Aorta (tissue), 5 donors: ENCODE measurements at regions of chr2 and their contacts with region 1.

Region 1: DNA sequence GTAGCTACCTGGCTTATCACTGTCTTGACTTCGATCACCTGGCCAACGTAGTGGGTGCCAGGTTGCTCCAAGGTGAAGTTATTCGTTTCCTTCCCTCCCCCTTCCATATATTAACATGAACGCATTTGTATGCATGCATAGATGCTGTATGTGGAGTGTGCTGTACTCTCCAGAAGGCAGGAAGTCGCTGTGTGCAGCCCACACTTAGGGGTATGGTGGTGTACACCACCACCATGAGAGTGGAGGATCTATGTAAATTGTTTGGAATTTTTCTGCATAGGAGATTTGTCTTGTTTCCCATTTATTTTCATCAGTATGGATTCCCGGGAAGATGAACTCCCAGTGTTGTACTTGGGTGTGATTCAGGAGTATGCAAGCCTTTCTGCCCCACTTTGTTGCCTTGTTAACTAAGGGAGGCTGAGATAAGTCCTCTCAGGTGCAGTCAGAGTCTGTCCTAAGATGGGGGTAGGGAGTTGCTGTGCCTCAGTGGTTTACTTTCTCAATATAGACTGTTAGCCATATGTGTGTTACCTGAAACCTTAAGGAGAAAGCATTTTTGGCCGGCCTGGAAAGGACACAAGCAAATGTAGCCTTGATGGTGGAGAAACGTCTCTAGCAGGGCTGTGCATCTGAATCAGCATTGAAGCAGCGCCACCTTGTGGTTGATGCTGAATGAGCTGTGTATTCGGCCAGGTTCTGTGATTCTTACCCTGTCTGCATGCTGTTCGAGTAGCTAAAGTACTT is 149.8 kb downstream of the TANC1 start:
- DNase-seq: peak; percentile 87 to 94
- ATAC-seq: peak; percentile 79
- H3K4me3 ChIP-seq: no peak overlapping the region
- H3K27ac ChIP-seq: peak overlapping the region in 1 of 2 donors; percentile 20
- H3K4me1 ChIP-seq: peaks cover 0 to 8% of the 10 kb centered on the region in 2 donors
- H3K27me3 ChIP-seq: no peaks in the 10 kb centered on the region

Region 2: GRCh38 chr2:158903711-158904443 is 214.4 kb before region 1 on chr2:
- intact Hi-C with region 1: loop called (anchors 2 to 5 kb)
- DNase-seq: no peak
- ATAC-seq: no peak
- H3K4me3 ChIP-seq: no peak overlapping the region
- H3K27ac ChIP-seq: no peak overlapping the region
- H3K4me1 ChIP-seq: no peaks in the 10 kb centered on the region
- H3K27me3 ChIP-seq: no peaks in the 10 kb centered on the region

Region 3: DNA sequence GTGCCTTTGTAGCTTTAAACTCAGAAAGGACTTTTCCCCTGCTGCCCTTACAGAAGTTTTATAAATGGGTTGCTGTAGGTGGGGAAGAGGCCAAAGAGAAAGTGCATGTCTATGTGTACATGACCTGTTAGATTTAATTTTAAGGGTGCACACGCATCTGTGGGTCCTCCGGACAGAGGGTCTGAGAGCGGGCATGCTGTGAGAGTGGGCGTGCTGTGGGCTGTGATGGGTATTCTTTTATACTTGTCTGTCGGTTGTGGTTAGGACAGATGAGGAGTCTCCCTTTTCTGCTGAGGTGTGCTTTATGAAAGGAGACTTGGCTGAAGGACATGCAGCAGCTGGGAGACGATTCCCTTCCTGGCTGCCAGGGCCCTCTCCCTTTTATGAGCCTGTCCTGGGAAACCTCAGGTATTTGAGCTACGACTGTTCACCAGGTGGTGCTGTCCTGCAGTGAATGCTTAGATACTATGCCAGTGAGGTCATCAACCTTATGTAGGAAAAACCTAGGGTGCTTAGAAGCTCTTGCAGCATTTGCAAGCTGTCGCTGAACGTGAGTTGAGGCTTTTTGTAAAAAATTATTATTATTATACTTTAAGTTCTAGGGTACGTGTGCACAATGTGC is 82.4 kb before region 1 on chr2:
- intact Hi-C with region 1: loop called in 1 of 2 experiments (anchors 5 kb)
- DNase-seq: no peak
- ATAC-seq: no peak
- H3K4me3 ChIP-seq: no peak overlapping the region
- H3K27ac ChIP-seq: peak overlapping the region in 1 of 2 donors; percentile 62
- H3K4me1 ChIP-seq: peaks cover 4 to 13% of the 10 kb centered on the region in 2 donors
- H3K27me3 ChIP-seq: no peaks in the 10 kb centered on the region

Region 4: GRCh38 chr2:159807183-159808031 is 689.1 kb after region 1 on chr2:
- intact Hi-C with region 1: loop called in 1 of 2 experiments (anchors 5 kb)
- DNase-seq: no peak
- ATAC-seq: no peak
- H3K4me3 ChIP-seq: no peak overlapping the region
- H3K27ac ChIP-seq: no peak overlapping the region
- H3K4me1 ChIP-seq: no peaks in the 10 kb centered on the region
- H3K27me3 ChIP-seq: no peaks in the 10 kb centered on the region